PC-9 (cell line): ENCODE measurements at regions of chr7 and their contacts with region 1.

Region 1: GRCh38 chr7:82605247-82605872 is 161.8 kb upstream of the CACNA2D1 start:
- DNase-seq: peak in 1 of 2 experiments; percentile 15
- H3K4me3 ChIP-seq: no peak overlapping the region
- H3K27ac ChIP-seq: no peak overlapping the region
- H3K4me1 ChIP-seq: no peaks in the 10 kb centered on the region
- H3K27me3 ChIP-seq: no peaks in the 10 kb centered on the region
- CTCF ChIP-seq: peak; percentile 87

Region 2: GRCh38 chr7:82234457-82235049 is 370.8 kb before region 1 on chr7:
- CTCF ChIA-PET with region 1: interaction called, 4 read pairs
- POLR2A ChIA-PET with region 1: no interaction called
- intact Hi-C with region 1: loop called (anchors 1 kb)
- DNase-seq: no peak
- H3K4me3 ChIP-seq: no peak overlapping the region
- H3K27ac ChIP-seq: no peak overlapping the region
- H3K4me1 ChIP-seq: no peaks in the 10 kb centered on the region
- H3K27me3 ChIP-seq: no peaks in the 10 kb centered on the region
- CTCF ChIP-seq: peak; percentile 78

Region 3: DNA sequence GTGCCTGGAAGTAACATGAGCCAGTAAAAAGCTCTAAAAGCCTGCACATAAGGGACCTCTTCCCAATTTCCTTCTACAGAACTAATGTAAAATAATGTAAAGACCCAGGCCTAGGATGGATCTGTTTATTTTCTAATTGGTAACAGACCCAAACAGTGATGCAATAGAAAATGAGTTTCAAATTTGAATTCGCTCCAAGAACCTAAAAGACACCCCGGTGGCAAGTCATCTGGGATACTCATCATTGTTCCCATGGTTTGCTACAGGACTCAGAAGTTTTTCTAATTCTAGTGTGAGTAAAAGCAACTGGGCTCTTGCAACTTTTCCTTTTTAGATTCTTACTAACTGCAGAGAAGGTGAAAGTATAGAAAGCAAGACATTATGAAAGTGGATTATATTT is 109.5 kb after region 1 on chr7:
- CTCF ChIA-PET with region 1: no interaction called
- POLR2A ChIA-PET with region 1: no interaction called
- intact Hi-C with region 1: no loop called
- DNase-seq: no peak
- H3K4me3 ChIP-seq: no peak overlapping the region
- H3K27ac ChIP-seq: no peak overlapping the region
- H3K4me1 ChIP-seq: no peaks in the 10 kb centered on the region
- H3K27me3 ChIP-seq: no peaks in the 10 kb centered on the region
- CTCF ChIP-seq: no peak